Prostate gland (tissue), 2 donors: ENCODE measurements at regions of chr14 and their contacts with region 1.

Region 1: GRCh38 chr14:50532502-50533240 is at the start of gene MAP4K5:
- DNase-seq: peak; percentile 92
- H3K4me3 ChIP-seq: peak within 1 kb of the TSS; percentile 90 to 93
- H3K27ac ChIP-seq: peak within 1 kb of the TSS; percentile 95 to 98
- H3K4me1 ChIP-seq: no peaks in the 10 kb centered on the region
- H3K27me3 ChIP-seq: no peaks in the 10 kb centered on the region
- CTCF ChIP-seq: peak; percentile 80 to 99 (median 92)
- POLR2A ChIP-seq: peak; percentile 73
- total RNA-seq, gene MAP4K5: 76.2 to 102 TPM

Region 2: DNA sequence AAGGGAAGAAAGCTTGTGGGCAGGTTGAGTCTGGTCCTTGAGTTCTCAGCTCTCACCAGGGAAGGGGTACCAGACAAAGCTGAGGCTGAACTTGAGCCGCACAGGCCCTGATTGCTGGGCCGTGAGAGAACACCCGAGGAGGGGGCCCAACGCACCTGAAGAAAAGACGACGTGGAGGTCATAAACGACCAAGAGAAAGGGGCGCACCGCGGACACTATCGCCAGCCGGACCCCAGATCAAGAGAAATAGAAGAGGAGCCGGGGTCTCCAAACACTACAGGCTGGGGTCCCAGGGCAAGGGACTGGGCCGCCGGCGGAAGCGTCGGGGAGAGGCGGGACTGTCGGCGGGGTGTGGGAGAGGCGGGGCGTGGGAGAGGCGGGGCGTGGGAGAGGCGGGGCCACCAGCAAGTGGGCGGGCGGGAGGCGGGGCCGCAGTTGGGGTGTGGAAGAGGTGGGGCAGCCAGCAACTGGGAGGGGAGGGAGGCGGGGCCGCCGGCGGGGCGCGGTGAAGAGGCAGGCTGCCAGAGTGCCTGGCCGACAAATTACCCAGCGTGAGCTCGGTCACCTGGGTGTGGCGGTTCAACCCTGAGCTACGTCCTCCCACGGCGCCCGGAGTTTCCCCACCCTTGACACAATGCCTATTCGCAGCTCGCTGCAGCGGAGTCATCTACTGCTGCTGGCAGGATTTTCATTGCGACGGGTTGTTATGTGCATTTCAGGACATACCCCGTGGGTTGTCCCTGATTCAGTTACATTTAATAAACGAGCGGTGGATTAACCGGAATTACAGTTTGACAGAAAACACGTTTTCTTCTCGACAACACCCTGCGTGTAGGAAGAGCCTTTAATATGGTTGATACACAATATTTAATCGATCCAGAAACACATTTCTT is 664.6 kb before region 1 on chr14:
- intact Hi-C with region 1: loop called (anchors 10 kb)
- DNase-seq: peak; percentile 97
- H3K4me3 ChIP-seq: peak overlapping the region; percentile 45 to 49
- H3K27ac ChIP-seq: peak overlapping the region; percentile 94 to 98
- H3K4me1 ChIP-seq: no peaks in the 10 kb centered on the region
- H3K27me3 ChIP-seq: no peaks in the 10 kb centered on the region
- CTCF ChIP-seq: peak in 1 of 4 experiments; percentile 4
- POLR2A ChIP-seq: peak; percentile 74

Region 3: DNA sequence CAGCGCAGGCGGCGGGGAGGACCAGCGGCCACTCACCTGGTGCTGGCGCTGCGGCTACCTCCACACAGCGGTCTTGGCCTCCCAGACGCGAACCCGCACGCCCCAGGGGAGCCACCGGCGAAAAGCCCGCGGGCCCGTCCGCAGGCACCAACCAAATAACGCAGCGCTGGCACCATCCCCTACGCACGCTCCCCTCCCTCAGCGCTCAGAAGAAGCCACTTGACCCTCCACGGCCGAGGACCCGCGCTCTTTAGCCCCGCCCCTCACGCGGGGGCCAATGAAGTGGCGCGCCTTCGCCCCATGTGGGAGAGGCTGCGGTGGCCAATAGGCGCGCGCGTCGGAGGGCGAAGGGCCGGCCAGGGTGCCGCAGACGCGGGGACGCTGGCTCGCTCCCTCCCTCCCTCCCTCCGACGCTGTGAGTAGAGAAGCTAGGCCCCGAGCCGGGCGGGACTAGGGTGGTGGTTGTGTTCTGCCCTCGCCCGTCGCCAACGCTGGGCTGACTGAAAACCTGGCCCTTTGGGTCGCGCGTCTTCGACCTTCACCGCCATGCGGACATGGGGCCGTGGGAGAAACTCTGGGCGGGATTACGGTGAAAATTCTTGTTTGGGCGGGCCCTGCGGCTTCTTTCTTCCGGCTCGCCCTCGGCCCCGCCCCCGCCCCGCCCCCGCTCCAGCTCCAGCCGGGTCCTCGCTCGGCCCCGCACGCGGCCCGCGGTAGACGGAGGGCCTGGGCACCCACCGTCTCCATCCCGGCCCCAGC is 220.5 kb before region 1 on chr14 and contains the starts of genes DMAC2L and L2HGDH:
- intact Hi-C with region 1: loop called (anchors 2 kb)
- DNase-seq: peak; percentile 91
- H3K4me3 ChIP-seq: peak within 1 kb of the TSS; percentile 55 to 71
- H3K27ac ChIP-seq: peak within 1 kb of the TSS; percentile 93 to 94
- H3K4me1 ChIP-seq: no peaks in the 10 kb centered on the region
- H3K27me3 ChIP-seq: no peaks in the 10 kb centered on the region
- CTCF ChIP-seq: peak in 3 of 4 experiments; percentile 29 to 69 (median 50)
- POLR2A ChIP-seq: peak; percentile 77
- total RNA-seq, gene DMAC2L: 6.9 to 24.5 TPM
- total RNA-seq, gene L2HGDH: 5.6 to 6.5 TPM

Region 4: GRCh38 chr14:50321009-50321660 is 211.5 kb before region 1 on chr14:
- intact Hi-C with region 1: loop called (anchors 2 kb)
- DNase-seq: peak; percentile 70
- H3K4me3 ChIP-seq: no peak overlapping the region
- H3K27ac ChIP-seq: peak overlapping the region; percentile 48 to 57
- H3K4me1 ChIP-seq: no peaks in the 10 kb centered on the region
- H3K27me3 ChIP-seq: no peaks in the 10 kb centered on the region
- CTCF ChIP-seq: peak; percentile 65 to 81 (median 76)
- POLR2A ChIP-seq: no peak

Region 5: GRCh38 chr14:50342221-50343078 is 190.2 kb before region 1 on chr14:
- intact Hi-C with region 1: loop called (anchors 1 kb)
- DNase-seq: peak; percentile 80
- H3K4me3 ChIP-seq: peak overlapping the region in 1 of 2 donors; percentile 1
- H3K27ac ChIP-seq: peak overlapping the region; percentile 37 to 67
- H3K4me1 ChIP-seq: peaks cover 13% of the 10 kb centered on the region
- H3K27me3 ChIP-seq: no peaks in the 10 kb centered on the region
- CTCF ChIP-seq: peak in 3 of 4 experiments; percentile 43 to 54 (median 46)
- POLR2A ChIP-seq: no peak

Region 6: DNA sequence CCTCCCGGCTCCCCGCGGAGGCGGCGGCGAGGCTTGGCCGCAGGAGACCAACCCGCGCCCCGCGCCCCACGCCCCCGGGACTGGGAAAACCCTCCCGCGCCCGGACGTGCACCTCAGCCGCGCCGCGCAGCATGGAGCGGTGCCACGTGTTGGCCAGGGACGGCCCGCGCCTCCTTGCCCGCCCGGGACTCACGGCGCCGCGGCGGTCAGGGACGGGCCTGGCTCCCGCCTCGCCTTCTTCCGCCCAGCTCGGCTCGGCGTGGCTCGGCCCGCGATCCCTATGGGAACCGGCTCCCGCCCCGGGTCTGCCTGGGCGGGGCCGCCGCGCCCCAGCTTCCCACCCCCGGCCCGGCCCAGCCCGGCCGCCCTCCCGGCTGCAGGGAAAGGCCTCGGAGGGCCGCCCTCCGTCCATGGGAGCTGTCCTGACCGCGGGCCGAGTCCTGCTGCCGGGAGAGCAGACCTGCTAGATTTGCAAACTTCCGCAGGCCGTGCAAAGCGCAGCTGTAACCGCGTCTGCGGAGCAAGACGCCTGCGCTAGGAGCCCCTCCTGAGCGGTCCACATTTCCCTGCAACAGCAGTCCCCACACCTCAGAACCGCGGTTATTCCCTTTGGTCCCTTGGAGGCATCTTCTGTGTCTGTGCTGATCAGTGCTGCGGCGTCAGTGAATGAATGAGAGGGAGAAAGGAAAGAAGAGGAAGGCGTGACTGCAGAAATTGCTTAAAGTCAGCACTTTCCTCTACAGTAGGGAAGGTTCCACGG is 135.9 kb before region 1 on chr14 and contains the start of gene CDKL1:
- intact Hi-C with region 1: loop called (anchors 2 kb)
- DNase-seq: peak; percentile 43
- H3K4me3 ChIP-seq: peak within 1 kb of the TSS; percentile 64 to 68
- H3K27ac ChIP-seq: peak within 1 kb of the TSS; percentile 78 to 83
- H3K4me1 ChIP-seq: no peaks in the 10 kb centered on the region
- H3K27me3 ChIP-seq: no peaks in the 10 kb centered on the region
- CTCF ChIP-seq: no peak
- POLR2A ChIP-seq: peak; percentile 11
- total RNA-seq, gene CDKL1: 3.4 to 18.5 TPM